GM18951 (cell line): ENCODE measurements at regions of chr17 and their contacts with region 1.

Region 1: DNA sequence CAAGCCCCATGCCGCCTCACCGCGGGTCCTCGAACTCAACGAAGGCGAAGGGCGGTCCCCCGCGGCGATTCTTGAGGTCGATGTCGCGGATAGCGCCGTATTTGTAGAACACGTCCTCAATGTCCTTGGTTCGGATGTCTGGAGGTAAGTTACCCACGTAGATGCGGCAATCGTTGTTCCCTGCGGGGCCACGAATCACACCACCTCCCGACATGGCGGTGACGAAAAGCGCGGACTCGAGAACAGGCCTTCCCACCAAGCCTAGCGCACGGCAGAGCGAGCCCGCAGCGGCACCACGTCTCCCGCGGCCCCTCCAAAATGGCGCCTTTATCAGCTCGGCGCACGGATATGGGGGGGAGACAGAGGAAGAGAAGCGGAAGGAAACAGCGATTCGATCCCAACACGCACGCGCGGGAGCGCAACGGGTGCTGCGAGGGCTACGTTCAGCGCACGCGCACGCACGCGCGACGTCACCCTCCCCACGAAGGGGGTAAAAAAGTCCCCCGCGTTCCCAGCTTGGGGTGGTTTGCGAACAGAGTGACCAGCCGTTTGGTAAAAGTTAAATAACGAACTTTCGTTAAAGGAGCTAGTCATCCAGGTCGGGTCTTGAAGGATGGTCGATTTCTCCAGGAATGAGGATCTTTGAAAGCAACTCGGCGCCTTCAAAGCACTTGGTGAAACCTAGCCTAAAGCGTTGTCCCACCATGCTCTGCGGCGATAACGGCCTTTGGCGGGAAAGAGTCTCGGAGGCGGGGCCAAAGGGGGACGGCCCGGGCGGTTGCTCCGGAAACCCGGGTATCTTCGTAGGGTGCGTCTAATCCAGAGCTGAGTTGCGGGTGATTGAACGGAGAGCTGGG is at the start of gene SRSF1:
- POLR2A ChIP-seq: peak; percentile 95

Region 2: GRCh38 chr17:57892146-57892828 is 114.9 kb before region 1 on chr17:
- in situ Hi-C with region 1: loop called (anchors 10 kb)
- POLR2A ChIP-seq: no peak